ENCODE measurements at regions of chr11 and their contacts with region 1.

Region 1: GRCh38 chr11:65593518-65594298 is 1.9 kb downstream of the KCNK7 start:
- DNase-seq: peak; percentile 63
- ATAC-seq: peak; percentile 61
- H3K4me3 Mint-ChIP-seq: no peak overlapping the region
- H3K27ac Mint-ChIP-seq: peak overlapping the region; percentile 49
- H3K4me1 Mint-ChIP-seq: peaks cover 25% of the 10 kb centered on the region
- H3K27me3 Mint-ChIP-seq: no peaks in the 10 kb centered on the region

Region 2: GRCh38 chr11:65524741-65525545 is 68.8 kb before region 1 on chr11 and contains the start of gene SCYL1:
- CTCF ChIA-PET with region 1: interaction called, 11 read pairs
- DNase-seq: peak; percentile 82
- ATAC-seq: peak; percentile 91
- H3K4me3 Mint-ChIP-seq: peak within 1 kb of the TSS; percentile 73
- H3K27ac Mint-ChIP-seq: peak within 1 kb of the TSS; percentile 75
- H3K4me1 Mint-ChIP-seq: peaks cover 42% of the 10 kb centered on the region
- H3K27me3 Mint-ChIP-seq: no peaks in the 10 kb centered on the region
- total RNA-seq, gene SCYL1: 68.0 to 76.7 TPM

Region 3: GRCh38 chr11:65606876-65607613 is 13.3 kb after region 1 on chr11:
- CTCF ChIA-PET with region 1: interaction called, 34 read pairs
- DNase-seq: no peak
- ATAC-seq: no peak
- H3K4me3 Mint-ChIP-seq: no peak overlapping the region
- H3K27ac Mint-ChIP-seq: no peak overlapping the region
- H3K4me1 Mint-ChIP-seq: peaks cover 27% of the 10 kb centered on the region
- H3K27me3 Mint-ChIP-seq: no peaks in the 10 kb centered on the region

Region 4: DNA sequence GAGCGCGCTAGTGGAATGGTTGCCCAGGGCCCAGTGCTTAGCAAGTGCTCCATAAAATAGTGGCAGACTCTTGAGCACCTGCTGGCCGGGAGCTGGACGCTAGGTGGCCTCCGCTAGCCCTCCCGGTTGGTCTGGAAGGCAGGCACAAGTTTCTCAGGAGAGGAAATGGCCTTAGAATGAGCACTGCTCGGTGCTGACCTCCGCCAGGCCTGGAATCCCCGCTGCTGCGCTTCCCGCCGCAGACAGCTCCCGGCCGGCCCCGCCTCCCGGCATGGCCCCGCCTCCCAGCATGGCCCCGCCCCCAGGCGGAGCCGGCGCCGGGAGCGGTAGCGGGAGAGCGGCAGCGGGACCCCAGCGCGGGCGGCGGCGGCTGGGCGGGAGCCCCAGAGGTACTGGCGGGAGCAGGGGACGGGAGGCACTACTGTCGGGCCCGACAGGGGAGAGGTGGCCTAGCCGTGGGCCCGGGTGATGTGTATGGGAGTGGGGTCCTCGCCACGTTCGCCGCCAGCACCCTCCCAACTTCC is 44.1 kb after region 1 on chr11 and contains the start of gene SIPA1:
- CTCF ChIA-PET with region 1: interaction called, 11 read pairs
- DNase-seq: peak; percentile 76
- ATAC-seq: peak; percentile 64
- H3K4me3 Mint-ChIP-seq: peak within 1 kb of the TSS; percentile 81
- H3K27ac Mint-ChIP-seq: peak within 1 kb of the TSS; percentile 95
- H3K4me1 Mint-ChIP-seq: peaks cover 59% of the 10 kb centered on the region
- H3K27me3 Mint-ChIP-seq: no peaks in the 10 kb centered on the region
- total RNA-seq, gene SIPA1: 188 to 267 TPM

Measured in activated CD8-positive, alpha-beta memory T cell treated with anti-CD3 and anti-CD28 coated beads, Interleukin-2, amount 10 ng/mL, durations not matched to agents 7 days and 5 days (primary cell).